Right ventricle myocardium inferior (tissue), 1 donor: ENCODE measurements at regions of chr22 and their contacts with region 1.

Region 1: GRCh38 chr22:42868751-42869251 is 11.7 kb upstream of the ARFGAP3 start:
- DNase-seq: no peak
- ATAC-seq: peak; percentile 73

Region 2: GRCh38 chr22:42967933-42968332 is 99.1 kb after region 1 on chr22:
- intact Hi-C with region 1: loop called (anchors 5 kb)
- DNase-seq: peak; percentile 90
- ATAC-seq: peak; percentile 85

Region 3: GRCh38 chr22:43031617-43032016 is 162.8 kb after region 1 on chr22:
- intact Hi-C with region 1: loop called (anchors 5 kb)
- DNase-seq: no peak
- ATAC-seq: no peak

Region 4: GRCh38 chr22:43088979-43089717 is 220.3 kb after region 1 on chr22 and contains the start of gene TTLL1:
- intact Hi-C with region 1: loop called (anchors 5 kb)
- DNase-seq: peak; percentile 96
- ATAC-seq: peak; percentile 93
- total RNA-seq, gene TTLL1: 7.3 TPM